IMR-90 (cell line): ENCODE measurements at regions of chr11 and their contacts with region 1.

Region 1: GRCh38 chr11:96384150-96384549 is 5.6 kb downstream of the CCDC82 start:
- DNase-seq: no peak
- ATAC-seq: no peak
- H3K4me3 ChIP-seq: no peak overlapping the region
- H3K27ac ChIP-seq: no peak overlapping the region
- H3K4me1 ChIP-seq: no peaks in the 10 kb centered on the region; the same call in 1 of the 2 replicates
- H3K27me3 ChIP-seq: no peaks in the 10 kb centered on the region
- CTCF ChIP-seq: no peak
- POLR2A ChIP-seq: no peak
- RAD21 ChIP-seq: no peak

Region 2: GRCh38 chr11:96122601-96123074 is 261.5 kb before region 1 on chr11:
- CTCF ChIA-PET with region 1: interaction called, 10 read pairs
- POLR2A ChIA-PET with region 1: no interaction called
- dilution Hi-C with region 1: no loop called
- in situ Hi-C with region 1: no loop called
- intact Hi-C with region 1: no loop called
- DNase-seq: peak; percentile 35
- ATAC-seq: peak; percentile 60
- H3K4me3 ChIP-seq: no peak overlapping the region
- H3K27ac ChIP-seq: no peak overlapping the region
- H3K4me1 ChIP-seq: peaks cover 6% of the 10 kb centered on the region
- H3K27me3 ChIP-seq: no peaks in the 10 kb centered on the region
- CTCF ChIP-seq: no peak
- POLR2A ChIP-seq: no peak
- RAD21 ChIP-seq: no peak